ENCODE measurements at regions of chr14 and their contacts with region 1.

Region 1: GRCh38 chr14:39446131-39446744 is 14.0 kb upstream of the FBXO33 start:
- DNase-seq: no peak
- H3K4me3 ChIP-seq: no peak overlapping the region
- H3K27ac ChIP-seq: no peak overlapping the region
- H3K4me1 ChIP-seq: no peaks in the 10 kb centered on the region
- H3K27me3 ChIP-seq: no peaks in the 10 kb centered on the region
- CTCF ChIP-seq: no peak

Region 2: DNA sequence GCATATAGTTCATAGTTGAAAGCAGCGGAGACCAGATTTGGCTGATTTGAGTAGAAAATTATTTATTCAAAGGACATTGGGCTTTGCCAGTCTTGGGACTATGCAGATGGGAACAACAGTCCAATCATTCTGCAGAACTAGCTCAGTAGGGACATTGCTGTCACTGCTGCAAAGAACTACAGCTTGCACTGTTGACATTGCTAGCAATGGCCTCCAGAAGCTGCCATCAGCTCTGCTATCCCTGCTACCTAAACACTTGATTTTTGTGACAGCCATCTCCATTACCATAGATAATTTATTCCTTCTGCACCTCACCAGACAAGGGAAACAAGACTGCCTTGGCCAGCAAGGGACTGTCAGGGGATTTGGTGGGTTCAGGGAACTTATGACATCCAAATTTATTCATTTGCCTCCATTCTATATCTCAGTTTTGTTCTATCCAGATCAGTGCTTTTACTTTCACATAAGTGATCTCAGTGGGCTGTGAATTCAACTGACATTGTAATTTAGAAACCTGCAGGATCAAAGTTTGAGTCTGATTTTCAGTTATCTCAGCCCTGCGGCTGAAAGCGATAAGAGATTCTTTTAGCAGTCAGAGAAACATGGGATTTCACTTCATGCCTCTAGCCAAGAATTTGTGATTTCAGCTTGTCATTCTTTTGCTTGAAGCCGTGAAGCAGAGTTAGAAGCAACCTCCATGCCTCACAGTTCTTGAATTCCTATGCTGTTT is 122.7 kb after region 1 on chr14:
- CTCF ChIA-PET with region 1: no interaction called
- POLR2A ChIA-PET with region 1: interaction called, 11 read pairs
- intact Hi-C with region 1: no loop called
- DNase-seq: no peak
- H3K4me3 ChIP-seq: no peak overlapping the region
- H3K27ac ChIP-seq: no peak overlapping the region
- H3K4me1 ChIP-seq: no peaks in the 10 kb centered on the region
- H3K27me3 ChIP-seq: no peaks in the 10 kb centered on the region
- CTCF ChIP-seq: no peak